Endothelial cell of umbilical vein (primary cell): ENCODE measurements at regions of chr14 and their contacts with region 1.

Region 1: GRCh38 chr14:92456215-92457015 is 57.2 kb upstream of the RIN3 start:
- DNase-seq: peak; percentile 66
- H3K4me3 ChIP-seq: no peak overlapping the region
- H3K27ac ChIP-seq: no peak overlapping the region
- H3K4me1 ChIP-seq: peaks cover 24% of the 10 kb centered on the region
- H3K27me3 ChIP-seq: no peaks in the 10 kb centered on the region
- CTCF ChIP-seq: peak; percentile 56 to 74
- POLR2A ChIP-seq: no peak

Region 2: DNA sequence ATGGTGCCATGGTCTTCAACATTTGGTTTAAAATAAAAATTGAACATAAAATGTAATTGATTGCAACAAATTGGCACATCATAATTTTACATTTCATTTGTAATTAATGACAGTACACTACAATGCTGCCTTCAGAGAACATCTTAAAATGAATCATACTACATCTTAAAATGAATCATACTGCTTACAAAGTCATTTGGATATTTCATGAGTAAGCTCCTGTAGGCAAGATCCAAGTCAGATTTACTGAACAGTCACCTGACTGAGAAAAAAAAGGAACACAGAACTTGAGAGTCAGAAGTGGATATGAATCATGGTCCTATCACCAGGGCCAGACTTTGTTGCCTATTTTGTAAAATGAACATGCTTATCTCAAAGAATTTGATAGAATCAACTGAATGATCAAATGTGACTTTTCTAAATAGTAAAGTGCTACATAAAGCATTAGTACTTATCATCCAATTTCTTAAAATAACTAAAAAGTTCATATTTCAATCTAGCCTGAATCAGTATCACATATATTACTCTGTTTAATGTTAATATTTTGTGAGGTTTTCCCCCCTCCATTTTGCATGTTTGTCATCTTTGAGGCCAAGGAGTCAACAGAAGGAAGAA is 476.2 kb before region 1 on chr14:
- CTCF ChIA-PET with region 1: no interaction called
- POLR2A ChIA-PET with region 1: no interaction called
- dilution Hi-C with region 1: no loop called
- intact Hi-C with region 1: loop called (anchors 5 kb)
- DNase-seq: peak; percentile 94
- H3K4me3 ChIP-seq: no peak overlapping the region
- H3K27ac ChIP-seq: peak overlapping the region; percentile 71
- H3K4me1 ChIP-seq: peaks cover 34% of the 10 kb centered on the region
- H3K27me3 ChIP-seq: no peaks in the 10 kb centered on the region
- CTCF ChIP-seq: no peak
- POLR2A ChIP-seq: no peak

Region 3: GRCh38 chr14:92154283-92154942 is 302.0 kb before region 1 on chr14:
- CTCF ChIA-PET with region 1: no interaction called
- POLR2A ChIA-PET with region 1: no interaction called
- dilution Hi-C with region 1: no loop called
- intact Hi-C with region 1: loop called (anchors 5 kb)
- DNase-seq: no peak
- H3K4me3 ChIP-seq: no peak overlapping the region
- H3K27ac ChIP-seq: no peak overlapping the region
- H3K4me1 ChIP-seq: no peaks in the 10 kb centered on the region
- H3K27me3 ChIP-seq: no peaks in the 10 kb centered on the region
- CTCF ChIP-seq: no peak
- POLR2A ChIP-seq: no peak

Region 4: DNA sequence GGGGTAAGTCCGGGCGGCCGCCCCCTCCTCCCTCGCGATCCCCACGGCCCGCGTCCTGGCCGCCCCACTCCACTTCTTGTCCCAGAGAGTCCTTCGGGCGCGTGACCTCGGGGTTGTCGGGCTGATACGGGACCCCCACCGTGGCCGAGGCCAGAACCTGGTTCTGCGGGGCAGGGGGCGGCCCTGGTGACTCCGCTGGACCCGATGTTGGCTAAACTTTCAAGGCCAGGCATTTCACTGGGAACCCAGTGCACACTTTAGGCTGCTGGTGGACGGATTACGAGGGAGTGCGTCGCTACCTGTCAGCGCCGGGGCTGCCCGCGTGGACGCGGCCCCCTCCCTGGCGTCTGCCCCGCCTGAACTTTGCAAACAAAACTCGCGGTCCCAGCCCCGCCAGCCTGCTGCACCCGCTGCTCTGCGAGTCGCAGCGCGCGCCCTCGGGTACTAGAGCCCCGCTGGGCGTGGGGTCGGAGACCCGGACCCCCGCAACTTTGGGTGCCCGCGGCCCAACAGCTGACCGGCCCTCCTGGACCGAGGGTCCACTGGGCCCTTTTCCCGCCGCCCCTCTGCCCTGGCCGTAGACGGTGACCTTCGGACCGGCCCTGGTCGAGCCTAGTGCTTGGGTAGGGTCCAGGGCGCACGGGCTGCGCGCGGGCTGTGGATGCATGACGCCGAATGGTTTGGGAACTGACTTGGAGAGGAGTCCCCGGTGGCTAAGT is 57.7 kb after region 1 on chr14:
- CTCF ChIA-PET with region 1: interaction called, 4 read pairs
- POLR2A ChIA-PET with region 1: no interaction called
- dilution Hi-C with region 1: no loop called
- intact Hi-C with region 1: loop called (anchors 1 kb)
- DNase-seq: peak; percentile 34
- H3K4me3 ChIP-seq: peak overlapping the region; percentile 62 to 76 (median 67)
- H3K27ac ChIP-seq: peak overlapping the region; percentile 60
- H3K4me1 ChIP-seq: peaks cover 21% of the 10 kb centered on the region
- H3K27me3 ChIP-seq: no peaks in the 10 kb centered on the region
- CTCF ChIP-seq: no peak
- POLR2A ChIP-seq: no peak

Region 5: GRCh38 chr14:92524602-92525185 is 68.3 kb after region 1 on chr14:
- CTCF ChIA-PET with region 1: no interaction called
- POLR2A ChIA-PET with region 1: no interaction called
- dilution Hi-C with region 1: no loop called
- intact Hi-C with region 1: no loop called
- DNase-seq: no peak
- H3K4me3 ChIP-seq: no peak overlapping the region
- H3K27ac ChIP-seq: no peak overlapping the region
- H3K4me1 ChIP-seq: no peaks in the 10 kb centered on the region
- H3K27me3 ChIP-seq: no peaks in the 10 kb centered on the region
- CTCF ChIP-seq: no peak
- POLR2A ChIP-seq: no peak

Region 6: GRCh38 chr14:92551044-92551841 is 94.8 kb after region 1 on chr14:
- CTCF ChIA-PET with region 1: no interaction called
- POLR2A ChIA-PET with region 1: no interaction called
- dilution Hi-C with region 1: no loop called
- intact Hi-C with region 1: no loop called
- DNase-seq: no peak
- H3K4me3 ChIP-seq: no peak overlapping the region
- H3K27ac ChIP-seq: no peak overlapping the region
- H3K4me1 ChIP-seq: peaks cover 5% of the 10 kb centered on the region
- H3K27me3 ChIP-seq: no peaks in the 10 kb centered on the region
- CTCF ChIP-seq: no peak
- POLR2A ChIP-seq: no peak

Region 7: DNA sequence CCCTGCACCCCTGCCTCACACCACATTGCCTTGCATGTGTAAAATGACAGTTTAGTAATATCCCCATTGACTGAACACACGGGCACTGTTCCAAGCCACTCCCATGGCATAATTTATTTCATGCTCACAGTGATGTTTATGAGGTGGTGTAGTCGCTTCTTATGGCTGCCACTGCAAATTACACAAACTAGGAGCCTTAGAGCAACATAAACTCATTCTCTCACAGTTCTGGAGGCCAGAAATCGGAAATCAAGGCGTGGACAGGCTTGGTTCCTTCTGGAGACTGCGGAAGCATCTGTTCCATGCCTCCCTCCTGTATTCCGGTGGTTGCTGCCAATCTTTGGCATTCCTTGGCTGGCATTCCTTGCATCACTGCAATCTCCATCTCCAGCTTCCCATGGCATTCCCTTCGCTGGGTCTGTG is 154.4 kb after region 1 on chr14:
- CTCF ChIA-PET with region 1: no interaction called
- POLR2A ChIA-PET with region 1: no interaction called
- dilution Hi-C with region 1: no loop called
- intact Hi-C with region 1: loop called (anchors 1 kb)
- DNase-seq: peak; percentile 52
- H3K4me3 ChIP-seq: no peak overlapping the region
- H3K27ac ChIP-seq: peak overlapping the region; percentile 70
- H3K4me1 ChIP-seq: peaks cover 6% of the 10 kb centered on the region
- H3K27me3 ChIP-seq: no peaks in the 10 kb centered on the region
- CTCF ChIP-seq: no peak
- POLR2A ChIP-seq: no peak

Region 8: GRCh38 chr14:92686900-92687444 is 230.6 kb after region 1 on chr14:
- CTCF ChIA-PET with region 1: interaction called, 17 read pairs
- POLR2A ChIA-PET with region 1: no interaction called
- dilution Hi-C with region 1: no loop called
- intact Hi-C with region 1: no loop called
- DNase-seq: peak; percentile 71
- H3K4me3 ChIP-seq: peak overlapping the region in 1 of 3 experiments; percentile 33
- H3K27ac ChIP-seq: no peak overlapping the region
- H3K4me1 ChIP-seq: no peaks in the 10 kb centered on the region
- H3K27me3 ChIP-seq: no peaks in the 10 kb centered on the region
- CTCF ChIP-seq: peak; percentile 98 to 99
- POLR2A ChIP-seq: no peak